Endothelial cell of umbilical vein (primary cell): ENCODE measurements at regions of chr16 and their contacts with region 1.

Region 1: DNA sequence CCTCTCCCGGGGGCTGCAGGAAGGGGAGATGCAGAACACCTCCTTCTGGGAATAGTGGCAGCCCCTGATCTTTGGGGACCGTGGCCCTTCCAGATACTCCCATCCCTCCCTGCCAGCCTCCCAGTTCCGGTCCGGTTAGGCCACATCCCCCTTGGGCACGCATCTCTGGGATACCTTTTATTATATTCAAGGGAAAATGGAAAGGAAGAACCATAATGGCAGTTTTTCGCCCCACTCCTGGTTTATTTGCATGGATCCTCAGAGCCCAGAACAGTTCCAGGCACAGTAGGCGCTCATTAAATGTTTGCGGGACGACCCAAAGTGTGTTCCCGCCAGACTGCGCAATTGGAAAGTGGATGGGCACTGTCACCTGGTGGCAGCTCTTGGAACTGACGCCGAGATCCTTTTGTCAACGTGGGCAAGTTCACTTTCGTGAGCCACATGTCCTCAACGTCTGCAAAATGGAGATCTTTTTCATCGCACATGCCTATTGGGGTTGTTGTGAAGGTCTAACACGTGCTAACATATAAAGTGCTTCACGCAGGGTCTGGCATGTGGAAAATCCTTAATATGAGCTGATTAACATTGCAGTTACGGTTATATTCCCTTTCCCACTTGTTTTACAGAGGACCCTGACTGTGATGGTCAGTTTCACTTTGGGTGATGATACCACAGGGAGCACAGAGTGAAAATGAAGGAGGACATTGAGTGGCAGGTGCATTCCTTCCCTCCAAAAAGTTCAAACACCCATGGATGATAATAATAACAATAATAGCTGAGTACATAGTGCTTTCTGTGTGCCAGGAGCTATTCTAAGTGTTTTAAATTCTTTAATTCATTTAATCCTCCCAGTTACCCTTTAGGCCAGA is 1.7 kb upstream of the GPRC5B start:
- DNase-seq: peak; percentile 84
- H3K4me3 ChIP-seq: peak overlapping the region in 1 of 3 experiments; percentile 8
- H3K27ac ChIP-seq: no peak overlapping the region
- H3K4me1 ChIP-seq: peaks cover 21% of the 10 kb centered on the region
- H3K27me3 ChIP-seq: peaks cover 1 to 12% of the 10 kb centered on the region in 2 experiments
- CTCF ChIP-seq: peak; percentile 99
- POLR2A ChIP-seq: no peak

Region 2: DNA sequence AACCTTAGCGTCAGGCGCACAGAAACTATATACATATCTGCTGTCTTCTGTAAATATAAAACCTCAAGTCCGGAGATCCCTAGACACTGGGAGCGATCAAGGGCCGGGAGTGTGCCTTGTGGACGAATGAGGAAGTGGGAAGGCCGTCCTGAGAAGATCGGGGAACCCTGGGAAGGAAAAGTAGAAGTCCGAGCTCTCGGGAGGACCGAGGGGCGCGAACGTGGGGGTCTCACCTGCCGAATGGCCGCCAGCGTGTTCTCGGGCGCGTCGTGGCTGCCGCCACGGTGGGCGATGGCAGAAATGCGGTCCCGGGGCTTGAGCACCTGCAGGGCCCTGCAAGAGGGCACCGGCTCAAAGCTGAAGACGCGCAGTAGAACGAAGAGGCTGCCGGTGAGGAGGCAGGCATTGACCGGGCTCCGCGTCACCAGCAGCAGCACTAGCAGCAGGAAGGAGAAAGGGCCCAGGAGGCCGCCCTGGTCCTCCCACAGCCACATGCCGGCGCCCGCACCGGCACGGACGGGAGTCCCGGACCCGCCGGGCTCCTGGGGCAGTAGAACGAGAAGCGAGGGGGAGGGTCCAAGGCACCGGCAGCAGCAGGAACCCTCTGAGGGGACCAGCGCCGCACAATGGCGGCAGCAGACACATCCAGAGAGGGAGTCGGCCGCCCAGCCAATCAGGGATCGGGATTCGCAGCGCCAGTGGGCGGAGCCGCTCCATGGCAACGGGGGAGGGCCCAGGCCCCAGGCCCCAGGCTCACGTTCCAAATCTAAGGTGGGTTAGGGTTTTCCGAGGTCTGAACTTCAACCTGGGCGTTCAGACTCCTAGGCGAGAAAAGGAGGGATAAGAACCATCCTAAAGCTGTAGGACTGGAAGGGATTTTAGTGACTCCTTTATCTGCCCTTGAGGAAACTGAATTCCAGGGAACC is 364.6 kb before region 1 on chr16 and contains the start of gene GDE1:
- CTCF ChIA-PET with region 1: no interaction called
- POLR2A ChIA-PET with region 1: no interaction called
- dilution Hi-C with region 1: no loop called
- intact Hi-C with region 1: loop called (anchors 5 kb)
- DNase-seq: peak; percentile 92
- H3K4me3 ChIP-seq: peak within 1 kb of the TSS; percentile 88 to 93 (median 89)
- H3K27ac ChIP-seq: peak within 1 kb of the TSS; percentile 50
- H3K4me1 ChIP-seq: peaks cover 21% of the 10 kb centered on the region
- H3K27me3 ChIP-seq: no peaks in the 10 kb centered on the region
- CTCF ChIP-seq: peak in 1 of 2 donors; percentile 64
- POLR2A ChIP-seq: peak; percentile 80
- total RNA-seq, gene GDE1: 50.5 and 51.5 TPM in 2 replicates

Region 3: DNA sequence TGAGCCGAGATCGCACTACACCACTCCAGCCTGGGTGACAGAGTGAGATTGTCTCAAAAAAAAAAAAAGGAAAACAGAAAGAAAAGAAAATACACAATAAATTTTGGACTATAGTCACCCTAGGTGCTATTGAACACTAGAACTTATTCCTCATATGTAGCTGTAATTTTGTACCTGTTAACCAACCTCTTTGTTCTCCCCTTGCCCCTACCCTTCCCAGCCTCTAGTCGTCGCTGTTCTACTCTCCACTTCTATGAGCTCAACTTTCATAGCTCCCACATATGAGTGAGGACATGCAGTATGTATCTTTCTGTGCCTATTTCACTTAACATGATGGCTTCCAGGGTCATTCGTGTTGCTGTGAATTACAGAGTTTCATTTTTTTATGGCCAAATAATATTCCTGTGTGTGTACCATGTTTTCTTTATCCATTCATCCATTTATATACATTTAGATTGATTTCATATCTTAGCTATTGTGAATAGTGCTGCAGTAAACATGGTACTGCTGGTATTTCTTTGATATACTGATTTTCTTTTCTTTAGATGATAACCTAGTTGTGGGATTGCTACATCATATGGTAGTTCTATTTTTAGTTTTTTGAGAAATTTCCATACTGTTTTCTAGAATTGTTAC is 302.5 kb before region 1 on chr16:
- CTCF ChIA-PET with region 1: interaction called, 35 read pairs
- POLR2A ChIA-PET with region 1: no interaction called
- dilution Hi-C with region 1: no loop called
- intact Hi-C with region 1: loop called (anchors 1 kb)
- DNase-seq: peak; percentile 60
- H3K4me3 ChIP-seq: no peak overlapping the region
- H3K27ac ChIP-seq: no peak overlapping the region
- H3K4me1 ChIP-seq: no peaks in the 10 kb centered on the region
- H3K27me3 ChIP-seq: no peaks in the 10 kb centered on the region
- CTCF ChIP-seq: peak; percentile 80 to 81
- POLR2A ChIP-seq: no peak

Region 4: GRCh38 chr16:19601083-19601976 is 285.0 kb before region 1 on chr16:
- CTCF ChIA-PET with region 1: interaction called, 251 read pairs
- POLR2A ChIA-PET with region 1: interaction called, 4 read pairs
- dilution Hi-C with region 1: no loop called
- intact Hi-C with region 1: loop called (anchors 1 kb)
- DNase-seq: peak; percentile 60
- H3K4me3 ChIP-seq: no peak overlapping the region
- H3K27ac ChIP-seq: no peak overlapping the region
- H3K4me1 ChIP-seq: peaks cover 5% of the 10 kb centered on the region
- H3K27me3 ChIP-seq: no peaks in the 10 kb centered on the region
- CTCF ChIP-seq: peak; percentile 41 to 49
- POLR2A ChIP-seq: no peak

Region 5: GRCh38 chr16:19680881-19681340 is 205.4 kb before region 1 on chr16:
- CTCF ChIA-PET with region 1: interaction called, 10 read pairs
- POLR2A ChIA-PET with region 1: interaction called, 7 read pairs
- dilution Hi-C with region 1: no loop called
- intact Hi-C with region 1: no loop called
- DNase-seq: no peak
- H3K4me3 ChIP-seq: no peak overlapping the region
- H3K27ac ChIP-seq: no peak overlapping the region
- H3K4me1 ChIP-seq: no peaks in the 10 kb centered on the region
- H3K27me3 ChIP-seq: no peaks in the 10 kb centered on the region
- CTCF ChIP-seq: peak in 1 of 2 donors; percentile 7
- POLR2A ChIP-seq: no peak

Region 6: DNA sequence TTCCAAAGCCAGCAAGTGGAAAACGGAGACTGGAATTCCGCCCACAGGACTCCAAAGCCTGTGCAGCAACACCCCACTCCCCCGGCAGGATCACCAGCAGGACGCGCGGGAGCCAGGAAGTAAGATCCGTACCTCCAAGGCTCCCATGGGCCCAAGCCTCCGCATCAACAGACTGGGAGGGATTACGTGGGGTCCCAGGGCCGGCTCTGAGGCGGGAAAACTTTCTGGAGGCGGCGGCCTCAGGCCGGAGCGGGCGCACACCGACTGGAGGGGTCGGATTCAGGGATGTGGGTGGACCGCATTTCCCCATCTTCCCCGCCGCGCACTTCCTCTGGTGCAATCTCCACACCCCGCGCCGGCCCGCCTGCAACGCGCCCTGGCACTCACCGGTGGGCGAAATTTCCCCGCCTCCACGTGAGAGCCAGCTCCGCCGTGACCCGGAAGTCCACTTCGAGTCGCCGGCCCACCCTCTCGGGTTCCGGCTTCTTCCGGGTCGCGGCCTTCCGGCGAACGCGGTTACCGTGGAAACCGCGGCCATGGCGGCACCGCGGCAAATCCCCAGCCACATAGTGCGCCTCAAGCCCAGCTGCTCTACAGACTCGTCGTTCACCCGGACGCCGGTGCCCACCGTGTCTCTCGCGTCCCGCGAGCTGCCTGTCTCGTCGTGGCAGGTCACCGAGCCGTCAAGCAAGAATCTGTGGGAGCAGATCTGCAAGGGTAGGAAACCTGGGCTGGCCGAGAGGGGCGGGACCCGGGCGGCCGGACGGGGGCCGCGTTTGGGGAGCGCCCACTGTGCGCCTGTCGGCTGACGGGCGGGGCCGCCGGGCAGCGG is 168.3 kb before region 1 on chr16 and contains the starts of genes IQCK and KNOP1:
- CTCF ChIA-PET with region 1: interaction called, 14 read pairs
- POLR2A ChIA-PET with region 1: no interaction called
- dilution Hi-C with region 1: no loop called
- intact Hi-C with region 1: loop called (anchors 1 kb)
- DNase-seq: peak; percentile 89
- H3K4me3 ChIP-seq: peak within 1 kb of the TSS; percentile 68 to 100 (median 99)
- H3K27ac ChIP-seq: peak within 1 kb of the TSS; percentile 81
- H3K4me1 ChIP-seq: peaks cover 13% of the 10 kb centered on the region
- H3K27me3 ChIP-seq: no peaks in the 10 kb centered on the region
- CTCF ChIP-seq: peak in 1 of 2 donors; percentile 15
- POLR2A ChIP-seq: peak; percentile 32
- total RNA-seq, gene IQCK: 13.2 and 17.2 TPM in 2 replicates
- total RNA-seq, gene KNOP1: 33.5 and 43.2 TPM in 2 replicates

Region 7: GRCh38 chr16:19907161-19907992 is 21.1 kb after region 1 on chr16:
- CTCF ChIA-PET with region 1: interaction called, 13 read pairs
- POLR2A ChIA-PET with region 1: no interaction called
- dilution Hi-C with region 1: no loop called
- intact Hi-C with region 1: no loop called
- DNase-seq: peak; percentile 73
- H3K4me3 ChIP-seq: no peak overlapping the region
- H3K27ac ChIP-seq: no peak overlapping the region
- H3K4me1 ChIP-seq: no peaks in the 10 kb centered on the region
- H3K27me3 ChIP-seq: no peaks in the 10 kb centered on the region
- CTCF ChIP-seq: peak; percentile 97 to 100
- POLR2A ChIP-seq: no peak